ENCODE measurements at regions of chr5 and their contacts with region 1.

Region 1: DNA sequence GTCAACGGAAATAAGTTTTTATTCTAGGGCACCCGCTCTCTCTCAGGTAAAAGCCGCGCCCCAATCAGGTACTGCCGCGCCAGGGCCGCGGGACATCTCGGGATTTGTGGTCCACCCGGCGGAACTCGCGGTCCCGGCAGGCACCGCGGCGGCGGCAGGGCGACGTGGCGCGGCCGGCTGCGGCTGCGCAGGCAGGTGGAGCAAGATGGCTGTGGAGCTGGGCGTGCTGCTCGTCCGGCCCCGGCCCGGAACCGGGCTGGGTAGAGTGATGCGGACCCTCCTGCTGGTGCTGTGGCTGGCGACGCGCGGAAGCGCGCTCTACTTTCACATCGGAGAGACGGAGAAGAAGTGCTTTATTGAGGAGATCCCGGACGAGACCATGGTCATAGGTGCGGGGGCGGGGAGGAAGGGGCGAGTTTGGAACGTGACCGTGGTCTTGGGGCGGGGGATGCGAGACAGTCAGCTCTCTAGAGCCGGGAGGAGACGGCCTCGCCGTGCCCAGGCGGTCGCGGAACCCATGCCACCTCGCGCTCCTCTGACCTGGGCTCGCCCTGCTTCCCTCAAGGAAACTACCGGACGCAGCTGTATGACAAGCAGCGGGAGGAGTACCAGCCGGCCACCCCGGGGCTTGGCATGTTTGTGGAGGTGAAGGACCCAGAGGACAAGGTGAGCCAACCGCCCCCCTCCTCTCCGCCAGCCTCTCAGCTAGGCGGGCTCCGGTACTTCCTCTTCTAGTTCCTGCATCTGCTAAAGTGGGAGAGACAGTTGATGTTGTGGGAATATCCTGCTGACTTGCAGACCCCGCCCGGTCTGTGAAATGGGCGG is at the start of gene TMED9:
- DNase-seq: peak; percentile 70 to 95 (median 88)

Region 2: GRCh38 chr5:177554474-177555111 is 37.6 kb before region 1 on chr5 and contains the start of gene FAM193B:
- intact Hi-C with region 1: loop called (anchors 5 kb)
- DNase-seq: peak; percentile 93 to 98 (median 96)